ENCODE measurements at regions of chr4 and their contacts with region 1.

Region 1: GRCh38 chr4:4800646-4801408 is 58.6 kb upstream of the MSX1 start:
- DNase-seq: no peak
- H3K4me3 ChIP-seq: no peak overlapping the region
- CTCF ChIP-seq: no peak

Region 2: GRCh38 chr4:4730249-4730648 is 70.6 kb before region 1 on chr4:
- in situ Hi-C with region 1: loop called (anchors 5 kb)
- DNase-seq: no peak
- H3K4me3 ChIP-seq: no peak overlapping the region
- CTCF ChIP-seq: no peak

Region 3: DNA sequence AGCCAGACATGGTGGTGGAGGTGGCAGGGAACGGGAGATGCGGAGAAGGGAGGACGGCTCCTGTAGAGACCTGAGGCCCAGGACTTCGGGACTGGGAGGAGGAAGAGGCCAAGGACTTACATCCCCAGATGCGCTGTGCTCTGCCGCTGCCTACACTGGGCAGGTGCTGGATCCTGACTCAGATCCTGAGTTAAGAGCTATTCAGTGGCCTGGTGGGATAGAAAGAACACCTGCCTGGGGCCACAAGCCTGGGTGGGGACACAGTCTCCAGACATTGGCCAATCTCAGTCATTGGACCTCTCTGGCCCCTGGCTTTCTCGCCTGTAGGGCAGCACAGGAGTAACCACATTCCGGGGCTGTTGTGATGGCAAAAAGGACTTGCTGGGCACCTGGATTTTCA is 47.7 kb after region 1 on chr4:
- in situ Hi-C with region 1: loop called (anchors 5 kb)
- DNase-seq: no peak
- H3K4me3 ChIP-seq: no peak overlapping the region
- CTCF ChIP-seq: no peak

Measured in astrocyte of the cerebellum (primary cell).